Breast epithelium (tissue), 4 donors: ENCODE measurements at regions of chr11 and their contacts with region 1.

Region 1: DNA sequence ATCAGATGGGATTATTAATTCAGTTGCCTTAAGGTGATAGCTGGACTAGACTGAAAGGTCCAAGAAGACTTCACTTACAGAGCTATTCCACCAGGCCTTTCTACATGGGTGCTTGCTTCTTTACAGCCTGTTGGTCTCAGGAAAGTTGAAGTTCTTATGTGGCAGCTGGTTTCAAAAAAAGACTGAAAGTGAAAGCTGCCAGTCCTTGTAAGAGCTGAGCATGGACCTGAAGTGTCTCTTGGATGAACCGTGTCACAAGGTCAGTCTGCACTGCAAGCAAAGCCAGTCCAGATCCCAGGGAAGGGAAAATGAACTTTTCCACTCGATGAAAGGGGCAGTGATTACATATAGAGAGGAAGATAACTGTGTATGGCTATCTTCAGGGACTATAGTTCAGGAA is 201.5 kb upstream of the LUZP2 start:
- DNase-seq: no peak
- H3K4me3 ChIP-seq: no peak overlapping the region
- H3K27ac ChIP-seq: no peak overlapping the region
- H3K4me1 ChIP-seq: no peaks in the 10 kb centered on the region
- H3K27me3 ChIP-seq: no peaks in the 10 kb centered on the region
- CTCF ChIP-seq: no peak
- POLR2A ChIP-seq: no peak

Region 2: DNA sequence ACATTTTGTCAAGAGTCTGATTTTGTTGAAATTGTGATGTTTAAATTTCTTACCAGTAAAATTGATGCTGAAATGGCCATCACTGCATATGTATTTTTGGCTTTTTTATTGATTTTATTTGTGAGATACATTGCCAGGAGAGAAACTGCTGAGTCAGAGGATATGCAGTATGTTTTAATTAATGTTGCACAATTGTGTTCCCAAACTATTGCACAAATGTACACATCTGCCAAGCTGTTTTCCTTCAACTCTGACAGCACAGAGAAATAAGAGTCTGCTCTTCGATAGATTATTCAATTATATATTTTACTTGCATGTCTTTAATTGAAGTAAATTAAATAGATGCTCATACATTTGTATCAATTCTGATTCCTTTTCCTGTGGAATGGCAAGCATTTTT is 438.7 kb before region 1 on chr11:
- intact Hi-C with region 1: loop called (anchors 10 kb)
- DNase-seq: no peak
- H3K4me3 ChIP-seq: no peak overlapping the region
- H3K27ac ChIP-seq: no peak overlapping the region
- H3K4me1 ChIP-seq: no peaks in the 10 kb centered on the region
- H3K27me3 ChIP-seq: no peaks in the 10 kb centered on the region
- CTCF ChIP-seq: no peak
- POLR2A ChIP-seq: no peak

Region 3: DNA sequence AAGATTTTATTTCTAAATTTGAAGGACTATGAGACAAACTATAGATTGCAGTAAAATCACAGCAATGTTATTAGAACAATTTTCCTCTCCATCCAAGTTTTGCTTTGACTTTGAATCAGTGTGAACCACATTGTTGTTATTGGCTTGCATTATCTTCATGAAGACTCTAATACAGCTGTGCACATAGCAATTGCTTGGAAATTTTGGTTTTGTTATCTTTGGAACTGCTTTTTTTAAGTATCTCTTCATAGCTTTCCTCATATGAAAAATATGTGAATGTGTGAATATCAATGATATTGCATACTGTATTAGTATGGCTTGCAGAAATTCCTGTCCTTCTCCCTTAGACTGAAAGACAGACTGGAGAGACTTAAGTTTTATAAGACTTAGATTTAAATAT is 868.1 kb after region 1 on chr11:
- intact Hi-C with region 1: no loop called
- DNase-seq: no peak
- H3K4me3 ChIP-seq: no peak overlapping the region
- H3K27ac ChIP-seq: no peak overlapping the region
- H3K4me1 ChIP-seq: no peaks in the 10 kb centered on the region
- H3K27me3 ChIP-seq: no peaks in the 10 kb centered on the region
- CTCF ChIP-seq: no peak
- POLR2A ChIP-seq: no peak